ENCODE measurements at regions of chrX and their contacts with region 1.

Region 1: GRCh38 chrX:81377329-81377728 is 175.4 kb downstream of the SH3BGRL start:
- DNase-seq: peak; percentile 0
- ATAC-seq: no peak
- H3K4me3 ChIP-seq: no peak overlapping the region
- H3K27ac ChIP-seq: no peak overlapping the region
- H3K4me1 ChIP-seq: no peaks in the 10 kb centered on the region
- H3K27me3 ChIP-seq: no peaks in the 10 kb centered on the region
- CTCF ChIP-seq: peak; percentile 35
- EP300 ChIP-seq: no peak
- POLR2A ChIP-seq: no peak
- RAD21 ChIP-seq: no peak

Region 2: DNA sequence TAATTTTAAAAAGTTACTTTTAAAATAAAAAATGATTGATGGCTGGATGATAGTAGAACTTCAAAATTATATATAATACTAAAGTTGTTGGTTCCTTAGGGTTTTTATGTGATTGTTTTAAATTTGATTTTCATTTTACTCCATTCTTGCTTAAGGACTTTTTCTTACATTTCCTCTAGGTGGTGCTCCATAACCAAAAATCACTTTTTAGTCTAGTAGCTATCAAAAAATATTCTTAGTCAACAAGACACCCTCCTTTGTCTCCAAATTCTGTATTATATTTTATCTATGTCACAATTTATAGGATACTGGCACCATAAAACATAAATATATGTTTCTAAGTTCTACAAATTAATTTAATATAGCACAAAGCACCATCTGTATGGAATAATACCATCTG is 500.5 kb before region 1 on chrX:
- CTCF ChIA-PET with region 1: no interaction called
- POLR2A ChIA-PET with region 1: no interaction called
- in situ Hi-C with region 1: no loop called
- intact Hi-C with region 1: loop called (anchors 5 kb)
- DNase-seq: peak; percentile 7
- ATAC-seq: no peak
- H3K4me3 ChIP-seq: no peak overlapping the region
- H3K27ac ChIP-seq: no peak overlapping the region
- H3K4me1 ChIP-seq: no peaks in the 10 kb centered on the region
- H3K27me3 ChIP-seq: no peaks in the 10 kb centered on the region
- CTCF ChIP-seq: no peak
- EP300 ChIP-seq: no peak
- POLR2A ChIP-seq: no peak
- RAD21 ChIP-seq: no peak

Region 3: GRCh38 chrX:81174286-81174685 is 203.0 kb before region 1 on chrX:
- CTCF ChIA-PET with region 1: no interaction called
- POLR2A ChIA-PET with region 1: no interaction called
- in situ Hi-C with region 1: loop called (anchors 25 kb)
- intact Hi-C with region 1: no loop called
- DNase-seq: peak; percentile 3
- ATAC-seq: no peak
- H3K4me3 ChIP-seq: no peak overlapping the region
- H3K27ac ChIP-seq: no peak overlapping the region
- H3K4me1 ChIP-seq: no peaks in the 10 kb centered on the region
- H3K27me3 ChIP-seq: no peaks in the 10 kb centered on the region
- CTCF ChIP-seq: no peak
- EP300 ChIP-seq: no peak
- POLR2A ChIP-seq: no peak
- RAD21 ChIP-seq: no peak

Region 4: GRCh38 chrX:81405781-81406180 is 28.5 kb after region 1 on chrX:
- CTCF ChIA-PET with region 1: no interaction called
- POLR2A ChIA-PET with region 1: no interaction called
- in situ Hi-C with region 1: no loop called
- intact Hi-C with region 1: no loop called
- DNase-seq: no peak
- ATAC-seq: no peak
- H3K4me3 ChIP-seq: no peak overlapping the region
- H3K27ac ChIP-seq: no peak overlapping the region
- H3K4me1 ChIP-seq: no peaks in the 10 kb centered on the region
- H3K27me3 ChIP-seq: no peaks in the 10 kb centered on the region
- CTCF ChIP-seq: no peak
- EP300 ChIP-seq: no peak
- POLR2A ChIP-seq: no peak
- RAD21 ChIP-seq: no peak